Caco-2 (cell line): ENCODE measurements at regions of chr13 and their contacts with region 1.

Region 1: GRCh38 chr13:79480954-79481684 is at the start of gene NDFIP2:
- DNase-seq: peak; percentile 95 to 98
- H3K4me3 ChIP-seq: peak within 1 kb of the TSS; percentile 75
- H3K4me3 Mint-ChIP-seq: peak within 1 kb of the TSS; percentile 86
- H3K27ac Mint-ChIP-seq: peak within 1 kb of the TSS; percentile 90
- H3K4me1 ChIP-seq: peaks cover 35% of the 10 kb centered on the region
- H3K4me1 Mint-ChIP-seq: peaks cover 17% of the 10 kb centered on the region
- H3K27me3 ChIP-seq: no peaks in the 10 kb centered on the region
- H3K27me3 Mint-ChIP-seq: no peaks in the 10 kb centered on the region
- CTCF ChIP-seq: peak in 1 of 2 experiments; percentile 6
- total RNA-seq, gene NDFIP2: 53.3 and 61.2 TPM in 2 replicates

Region 2: GRCh38 chr13:79423801-79424642 is 57.1 kb before region 1 on chr13:
- CTCF ChIA-PET with region 1: interaction called, 19 read pairs
- POLR2A ChIA-PET with region 1: interaction called, 12 read pairs
- intact Hi-C with region 1: loop called (anchors 1 kb)
- DNase-seq: no peak
- H3K4me3 ChIP-seq: no peak overlapping the region
- H3K4me3 Mint-ChIP-seq: no peak overlapping the region
- H3K27ac Mint-ChIP-seq: no peak overlapping the region
- H3K4me1 ChIP-seq: no peaks in the 10 kb centered on the region
- H3K4me1 Mint-ChIP-seq: no peaks in the 10 kb centered on the region
- H3K27me3 ChIP-seq: no peaks in the 10 kb centered on the region
- H3K27me3 Mint-ChIP-seq: no peaks in the 10 kb centered on the region
- CTCF ChIP-seq: peak; percentile 64 to 75

Region 3: GRCh38 chr13:79451500-79451962 is 29.6 kb before region 1 on chr13:
- CTCF ChIA-PET with region 1: no interaction called
- POLR2A ChIA-PET with region 1: interaction called, 12 read pairs
- intact Hi-C with region 1: loop called (anchors 1 kb)
- DNase-seq: peak in 1 of 2 experiments; percentile 8
- H3K4me3 ChIP-seq: no peak overlapping the region
- H3K4me3 Mint-ChIP-seq: no peak overlapping the region
- H3K27ac Mint-ChIP-seq: no peak overlapping the region
- H3K4me1 ChIP-seq: peaks cover 21% of the 10 kb centered on the region
- H3K4me1 Mint-ChIP-seq: peaks cover 12% of the 10 kb centered on the region
- H3K27me3 ChIP-seq: no peaks in the 10 kb centered on the region
- H3K27me3 Mint-ChIP-seq: no peaks in the 10 kb centered on the region
- CTCF ChIP-seq: no peak

Region 4: DNA sequence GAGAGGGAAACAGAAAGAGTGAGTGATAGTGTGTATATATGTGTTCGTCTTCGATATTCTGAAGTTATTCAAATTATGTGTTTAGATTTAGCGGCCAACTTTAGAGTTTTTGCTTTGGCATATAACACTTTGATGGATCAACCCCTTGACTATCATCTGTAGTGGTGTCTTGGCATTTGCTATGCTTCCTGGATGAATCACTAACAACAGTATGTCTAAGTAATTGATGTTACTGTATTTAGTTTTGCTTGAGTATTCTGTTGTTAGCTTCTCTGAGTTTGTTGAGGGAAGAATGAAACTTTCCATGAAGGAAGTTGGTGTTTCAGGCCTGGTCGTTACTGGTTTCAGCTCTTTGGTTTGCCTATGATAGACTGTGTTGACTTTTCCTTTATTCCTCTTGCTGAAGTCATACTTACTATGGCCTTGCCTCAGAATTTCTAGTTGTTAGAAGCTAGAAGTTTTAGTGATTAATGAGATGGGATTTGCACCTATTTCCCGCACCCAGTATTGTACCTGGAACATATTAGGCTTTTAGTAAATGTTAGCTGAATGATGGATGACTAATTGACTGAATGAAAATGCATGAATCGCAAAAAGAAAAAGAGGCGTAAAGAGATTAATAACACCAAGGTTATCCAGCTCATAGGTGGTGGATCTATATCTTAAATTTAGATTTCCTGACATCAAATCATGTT is 20.6 kb after region 1 on chr13:
- CTCF ChIA-PET with region 1: interaction called, 3 read pairs
- POLR2A ChIA-PET with region 1: interaction called, 9 read pairs
- intact Hi-C with region 1: loop called (anchors 1 kb)
- DNase-seq: no peak
- H3K4me3 ChIP-seq: no peak overlapping the region
- H3K4me3 Mint-ChIP-seq: no peak overlapping the region
- H3K27ac Mint-ChIP-seq: no peak overlapping the region
- H3K4me1 ChIP-seq: no peaks in the 10 kb centered on the region
- H3K4me1 Mint-ChIP-seq: peaks cover 5% of the 10 kb centered on the region
- H3K27me3 ChIP-seq: no peaks in the 10 kb centered on the region
- H3K27me3 Mint-ChIP-seq: no peaks in the 10 kb centered on the region
- CTCF ChIP-seq: no peak

Region 5: DNA sequence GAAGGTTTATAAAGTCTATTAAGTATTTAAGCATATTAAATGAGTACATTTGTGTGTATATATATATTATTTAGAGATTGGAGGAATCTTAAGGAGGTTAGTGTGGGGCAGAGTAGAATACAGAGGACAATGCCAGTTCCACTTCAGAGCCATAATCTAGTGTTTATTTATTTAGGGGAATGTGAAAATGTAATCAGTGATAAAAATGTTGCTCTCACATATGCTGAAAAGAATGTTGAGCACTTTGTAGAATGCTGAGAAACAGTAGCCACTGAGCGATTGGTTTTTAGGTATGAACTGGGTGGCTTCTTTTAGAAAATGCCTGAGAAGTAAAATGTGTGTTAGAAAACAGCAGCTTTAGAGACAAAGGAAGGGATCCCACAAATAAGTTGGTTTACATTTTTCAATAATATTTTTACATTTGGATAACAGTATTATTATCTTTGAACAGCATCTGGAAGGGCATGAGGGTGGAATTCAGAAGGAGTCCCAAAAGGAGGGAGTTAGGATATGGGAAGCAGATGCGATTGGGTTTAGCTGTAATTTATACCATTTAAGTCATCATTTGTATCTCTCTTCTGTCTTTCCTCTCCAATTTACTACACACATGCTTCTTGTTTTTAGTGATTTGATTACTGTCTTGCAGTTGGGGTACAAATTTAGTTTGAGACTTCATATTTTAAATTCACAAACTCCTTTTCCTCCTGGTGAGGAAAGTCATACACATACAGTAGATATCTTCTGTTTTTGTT is 68.4 kb after region 1 on chr13:
- CTCF ChIA-PET with region 1: no interaction called
- POLR2A ChIA-PET with region 1: no interaction called
- intact Hi-C with region 1: no loop called
- DNase-seq: no peak
- H3K4me3 ChIP-seq: no peak overlapping the region
- H3K4me3 Mint-ChIP-seq: no peak overlapping the region
- H3K27ac Mint-ChIP-seq: no peak overlapping the region
- H3K4me1 ChIP-seq: peaks cover 5% of the 10 kb centered on the region; the same call in 1 of the 2 replicates
- H3K4me1 Mint-ChIP-seq: peaks cover 11% of the 10 kb centered on the region
- H3K27me3 ChIP-seq: no peaks in the 10 kb centered on the region
- H3K27me3 Mint-ChIP-seq: no peaks in the 10 kb centered on the region
- CTCF ChIP-seq: no peak

Region 6: DNA sequence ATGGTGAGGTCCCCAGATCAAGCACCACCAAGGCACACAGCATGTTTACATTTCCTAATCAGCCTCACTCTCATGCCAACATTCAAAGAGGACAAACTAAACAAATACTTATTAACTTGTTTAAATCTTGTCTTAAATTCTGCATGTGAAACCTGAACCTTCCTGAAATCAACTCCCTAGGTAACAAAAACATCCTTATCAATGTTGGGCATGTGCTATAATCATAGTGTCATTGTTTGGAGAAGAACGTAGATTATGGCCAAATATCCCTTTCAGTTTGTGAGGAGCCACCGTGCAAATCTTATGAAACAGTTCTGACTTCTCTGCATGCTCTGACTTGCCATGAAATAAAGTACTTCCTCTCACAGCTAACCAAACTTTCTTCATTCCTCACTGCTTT is 123.6 kb after region 1 on chr13:
- CTCF ChIA-PET with region 1: no interaction called
- POLR2A ChIA-PET with region 1: no interaction called
- intact Hi-C with region 1: no loop called
- DNase-seq: no peak
- H3K4me3 ChIP-seq: no peak overlapping the region
- H3K4me3 Mint-ChIP-seq: no peak overlapping the region
- H3K27ac Mint-ChIP-seq: no peak overlapping the region
- H3K4me1 ChIP-seq: no peaks in the 10 kb centered on the region
- H3K4me1 Mint-ChIP-seq: no peaks in the 10 kb centered on the region
- H3K27me3 ChIP-seq: no peaks in the 10 kb centered on the region
- H3K27me3 Mint-ChIP-seq: no peaks in the 10 kb centered on the region
- CTCF ChIP-seq: no peak

Region 7: DNA sequence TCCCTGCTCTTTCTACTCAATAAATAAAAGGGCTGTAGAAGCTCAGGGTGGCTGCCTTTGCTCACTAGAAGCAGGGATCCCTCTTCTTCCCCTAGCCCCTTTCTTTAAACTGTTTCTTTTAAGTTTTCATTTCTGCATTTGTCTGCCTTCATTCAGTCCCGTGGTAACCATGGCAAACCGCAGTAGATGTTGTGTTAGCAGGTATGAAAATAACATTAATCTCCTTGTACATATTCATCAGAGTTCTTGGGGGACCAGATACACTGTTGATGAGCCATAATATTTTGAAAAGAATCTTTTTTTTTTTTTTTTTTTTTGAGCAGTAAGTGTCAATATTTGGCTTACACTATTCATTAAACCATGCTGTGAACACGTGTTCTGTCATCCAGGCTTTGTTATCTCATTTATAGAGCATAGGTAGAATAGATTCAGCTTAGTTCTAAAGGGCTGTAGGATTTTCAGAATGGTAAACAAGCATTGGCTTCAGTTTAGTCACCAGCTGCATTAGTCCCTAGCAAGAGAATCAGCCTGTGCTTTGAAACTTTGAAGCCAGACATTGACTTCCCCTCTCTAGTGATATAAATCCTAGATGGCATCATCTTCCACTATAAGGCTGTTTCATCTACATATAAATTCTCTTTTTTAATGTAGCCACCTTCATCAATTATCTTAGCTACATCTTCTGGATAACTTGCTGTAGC is 919.2 kb after region 1 on chr13:
- CTCF ChIA-PET with region 1: no interaction called
- POLR2A ChIA-PET with region 1: interaction called, 13 read pairs
- intact Hi-C with region 1: no loop called
- DNase-seq: no peak
- H3K4me3 ChIP-seq: no peak overlapping the region
- H3K4me3 Mint-ChIP-seq: no peak overlapping the region
- H3K27ac Mint-ChIP-seq: no peak overlapping the region
- H3K4me1 ChIP-seq: 0 out of 2 replicates have a peak, but pooled peaks cover 7% of the 10 kb centered on the region
- H3K4me1 Mint-ChIP-seq: peaks cover 7% of the 10 kb centered on the region
- H3K27me3 ChIP-seq: no peaks in the 10 kb centered on the region
- H3K27me3 Mint-ChIP-seq: no peaks in the 10 kb centered on the region
- CTCF ChIP-seq: no peak